OCI-LY7 (cell line): ENCODE measurements at regions of chr9 and their contacts with region 1.

Region 1: GRCh38 chr9:97645720-97646119 is 12.1 kb downstream of the NCBP1 start:
- DNase-seq: no peak
- H3K4me3 ChIP-seq: no peak overlapping the region
- H3K27ac ChIP-seq: no peak overlapping the region
- H3K4me1 ChIP-seq: no peaks in the 10 kb centered on the region
- CTCF ChIP-seq: no peak

Region 2: DNA sequence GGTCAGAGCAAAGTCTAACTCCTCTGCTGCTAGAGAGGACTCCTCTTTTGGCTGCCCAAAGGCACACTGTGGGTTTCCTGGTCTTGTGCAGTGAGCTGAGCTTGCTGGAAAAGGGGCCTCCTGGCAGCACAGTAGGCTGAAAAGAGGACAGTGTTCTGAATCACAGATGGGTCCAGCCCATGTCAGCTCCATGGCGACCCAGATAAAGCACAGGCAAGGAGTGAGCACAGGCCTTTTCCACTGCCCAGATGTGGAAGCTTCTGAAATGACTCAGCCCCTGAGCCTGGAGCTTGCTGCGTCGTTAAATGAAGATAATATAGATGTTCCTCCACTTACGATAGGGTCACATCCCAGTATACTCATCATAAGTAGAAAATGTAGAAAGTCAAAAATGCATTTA is 330.2 kb before region 1 on chr9:
- CTCF ChIA-PET with region 1: no interaction called
- POLR2A ChIA-PET with region 1: no interaction called
- intact Hi-C with region 1: no loop called
- DNase-seq: no peak
- H3K4me3 ChIP-seq: no peak overlapping the region
- H3K27ac ChIP-seq: no peak overlapping the region
- H3K4me1 ChIP-seq: no peaks in the 10 kb centered on the region
- CTCF ChIP-seq: no peak

Region 3: DNA sequence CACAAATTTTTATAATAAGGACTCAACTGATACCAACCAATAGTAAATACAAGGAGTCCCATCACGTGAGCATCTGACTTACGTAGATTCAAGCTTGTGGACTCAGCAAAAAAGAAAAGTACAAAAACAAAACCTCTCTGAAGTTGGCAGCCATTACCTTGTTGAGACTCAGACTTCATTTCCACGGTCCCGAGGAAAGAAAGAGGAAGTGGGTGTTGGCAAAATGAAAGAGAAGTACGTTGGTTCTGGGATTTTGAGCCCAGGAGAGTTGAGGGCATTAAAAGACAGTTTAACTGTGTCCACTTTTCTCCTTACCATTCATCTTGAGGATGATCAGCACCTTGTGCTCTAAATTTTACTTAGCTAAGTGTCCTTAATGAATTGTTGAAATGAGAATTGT is 14.6 kb after region 1 on chr9:
- CTCF ChIA-PET with region 1: interaction called, 3 read pairs
- POLR2A ChIA-PET with region 1: interaction called, 9 read pairs
- intact Hi-C with region 1: loop called (anchors 2 kb)
- DNase-seq: no peak
- H3K4me3 ChIP-seq: no peak overlapping the region
- H3K27ac ChIP-seq: no peak overlapping the region
- H3K4me1 ChIP-seq: no peaks in the 10 kb centered on the region
- CTCF ChIP-seq: no peak